CD8-positive, alpha-beta T cell (primary cell): ENCODE measurements at regions of chr11 and their contacts with region 1.

Region 1: GRCh38 chr11:2002807-2003206 is 5.2 kb upstream of the H19 start:
- DNase-seq: no peak
- ATAC-seq: peak; percentile 50
- H3K4me3 ChIP-seq: no peak overlapping the region
- H3K4me3 Mint-ChIP-seq: no peak overlapping the region
- H3K27ac ChIP-seq: no peak overlapping the region
- H3K27ac Mint-ChIP-seq: no peak overlapping the region
- H3K4me1 ChIP-seq: no peaks in the 10 kb centered on the region
- H3K4me1 Mint-ChIP-seq: no peaks in the 10 kb centered on the region
- H3K27me3 ChIP-seq: no peaks in the 10 kb centered on the region
- H3K27me3 Mint-ChIP-seq: no peaks in the 10 kb centered on the region
- CTCF ChIP-seq: no peak

Region 2: GRCh38 chr11:1876361-1877063 is 126.3 kb before region 1 on chr11:
- CTCF ChIA-PET with region 1: interaction called, 12 read pairs
- POLR2A ChIA-PET with region 1: no interaction called
- intact Hi-C with region 1: no loop called
- DNase-seq: peak in 2 of 9 experiments; percentile 32 to 34
- ATAC-seq: no peak
- H3K4me3 ChIP-seq: no peak overlapping the region
- H3K4me3 Mint-ChIP-seq: no peak overlapping the region
- H3K27ac ChIP-seq: no peak overlapping the region
- H3K27ac Mint-ChIP-seq: no peak overlapping the region
- H3K4me1 ChIP-seq: peaks cover 20% of the 10 kb centered on the region
- H3K4me1 Mint-ChIP-seq: peaks cover 27% of the 10 kb centered on the region
- H3K27me3 ChIP-seq: no peaks in the 10 kb centered on the region
- H3K27me3 Mint-ChIP-seq: no peaks in the 10 kb centered on the region
- CTCF ChIP-seq: no peak